CD4-positive, alpha-beta T cell (primary cell): ENCODE measurements at regions of chr4 and their contacts with region 1.

Region 1: DNA sequence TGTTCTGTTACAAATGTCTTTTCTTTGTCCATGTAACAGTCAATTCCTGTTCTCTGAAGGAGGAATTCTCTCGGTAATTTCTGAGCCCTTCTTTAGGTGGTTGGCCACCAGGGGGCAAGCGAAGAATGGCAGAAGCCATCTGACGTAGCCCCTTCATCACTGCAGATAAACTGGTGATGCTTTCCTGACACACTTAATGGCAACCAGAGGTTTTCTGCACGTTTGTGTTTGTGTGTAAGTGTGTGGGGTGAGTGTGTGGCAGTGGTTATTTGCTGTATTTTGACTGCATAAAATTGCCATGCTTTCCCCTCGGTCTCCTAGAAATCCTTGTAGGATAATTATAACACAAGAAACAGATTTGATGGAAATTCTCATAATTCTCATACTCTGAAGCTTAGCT is 64.8 kb upstream of the STOX2 start:
- DNase-seq: peak; percentile 37 to 75 (median 54)
- ATAC-seq: no peak
- H3K4me3 ChIP-seq: no peak overlapping the region
- H3K4me3 Mint-ChIP-seq: no peak overlapping the region
- H3K27ac ChIP-seq: no peak overlapping the region
- H3K27ac Mint-ChIP-seq: no peak overlapping the region
- H3K4me1 ChIP-seq: no peaks in the 10 kb centered on the region
- H3K4me1 Mint-ChIP-seq: no peaks in the 10 kb centered on the region
- H3K27me3 ChIP-seq: peaks cover 0 to 9% of the 10 kb centered on the region in 2 experiments
- H3K27me3 Mint-ChIP-seq: peaks cover 38% of the 10 kb centered on the region
- CTCF ChIP-seq: peak; percentile 82

Region 2: GRCh38 chr4:184100297-184100885 is 260.1 kb after region 1 on chr4:
- CTCF ChIA-PET with region 1: no interaction called
- POLR2A ChIA-PET with region 1: no interaction called
- intact Hi-C with region 1: loop called (anchors 2 kb)
- DNase-seq: peak in 7 of 14 experiments; percentile 7 to 54 (median 27)
- ATAC-seq: no peak
- H3K4me3 ChIP-seq: no peak overlapping the region
- H3K4me3 Mint-ChIP-seq: no peak overlapping the region
- H3K27ac ChIP-seq: no peak overlapping the region
- H3K27ac Mint-ChIP-seq: no peak overlapping the region
- H3K4me1 ChIP-seq: no peaks in the 10 kb centered on the region
- H3K4me1 Mint-ChIP-seq: peaks cover 8% of the 10 kb centered on the region
- H3K27me3 ChIP-seq: peaks cover 0 to 6% of the 10 kb centered on the region in 2 experiments
- H3K27me3 Mint-ChIP-seq: peaks cover 25% of the 10 kb centered on the region
- CTCF ChIP-seq: peak; percentile 51

Region 3: DNA sequence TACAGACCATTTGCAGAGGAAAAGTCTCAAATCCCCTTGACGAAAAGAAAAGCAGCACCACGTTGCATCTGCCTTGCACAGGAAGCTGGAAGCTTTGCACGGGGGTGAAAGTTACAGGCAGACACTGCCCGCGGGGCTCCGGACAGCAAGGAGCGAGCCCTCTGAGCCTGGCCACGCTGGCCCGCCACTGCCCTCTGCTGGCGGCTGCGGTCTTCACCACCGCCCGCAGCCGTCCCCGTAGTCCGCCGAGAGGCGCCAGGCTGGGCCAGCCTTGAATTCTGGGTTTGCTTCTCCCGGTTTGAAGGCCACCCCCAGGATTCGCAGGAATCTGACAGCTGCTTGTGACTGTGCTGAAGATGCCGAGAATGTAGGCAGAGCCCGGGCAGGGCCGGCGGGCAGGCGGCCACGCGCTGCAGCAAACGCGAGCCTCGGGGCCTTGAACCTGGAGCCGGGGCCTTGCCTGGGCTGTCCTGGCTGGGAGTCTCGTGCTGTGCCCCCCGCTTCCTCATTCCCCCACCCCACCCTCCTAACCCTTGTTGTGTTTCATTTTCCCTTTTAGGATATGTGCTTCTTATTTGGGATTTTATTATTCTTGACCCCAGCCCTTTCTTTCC is 328.2 kb after region 1 on chr4:
- CTCF ChIA-PET with region 1: no interaction called
- POLR2A ChIA-PET with region 1: no interaction called
- intact Hi-C with region 1: loop called (anchors 2 kb)
- DNase-seq: peak in 13 of 14 experiments; percentile 21 to 71 (median 34)
- ATAC-seq: peak; percentile 60
- H3K4me3 ChIP-seq: no peak overlapping the region
- H3K4me3 Mint-ChIP-seq: no peak overlapping the region
- H3K27ac ChIP-seq: no peak overlapping the region
- H3K27ac Mint-ChIP-seq: no peak overlapping the region
- H3K4me1 ChIP-seq: peaks cover 8% of the 10 kb centered on the region
- H3K4me1 Mint-ChIP-seq: no peaks in the 10 kb centered on the region
- H3K27me3 ChIP-seq: peaks cover 26 to 31% of the 10 kb centered on the region in 2 experiments
- H3K27me3 Mint-ChIP-seq: peaks cover 93% of the 10 kb centered on the region
- CTCF ChIP-seq: peak; percentile 80

Region 4: GRCh38 chr4:184250795-184251669 is 410.7 kb after region 1 on chr4:
- CTCF ChIA-PET with region 1: no interaction called
- POLR2A ChIA-PET with region 1: no interaction called
- intact Hi-C with region 1: loop called in 1 of 2 experiments (anchors 2 kb)
- DNase-seq: peak in 4 of 14 experiments; percentile 28 to 79 (median 68)
- ATAC-seq: peak; percentile 82
- H3K4me3 ChIP-seq: no peak overlapping the region
- H3K4me3 Mint-ChIP-seq: no peak overlapping the region
- H3K27ac ChIP-seq: no peak overlapping the region
- H3K27ac Mint-ChIP-seq: no peak overlapping the region
- H3K4me1 ChIP-seq: peaks cover 6% of the 10 kb centered on the region
- H3K4me1 Mint-ChIP-seq: no peaks in the 10 kb centered on the region
- H3K27me3 ChIP-seq: no peaks in the 10 kb centered on the region
- H3K27me3 Mint-ChIP-seq: no peaks in the 10 kb centered on the region
- CTCF ChIP-seq: peak; percentile 76

Region 5: DNA sequence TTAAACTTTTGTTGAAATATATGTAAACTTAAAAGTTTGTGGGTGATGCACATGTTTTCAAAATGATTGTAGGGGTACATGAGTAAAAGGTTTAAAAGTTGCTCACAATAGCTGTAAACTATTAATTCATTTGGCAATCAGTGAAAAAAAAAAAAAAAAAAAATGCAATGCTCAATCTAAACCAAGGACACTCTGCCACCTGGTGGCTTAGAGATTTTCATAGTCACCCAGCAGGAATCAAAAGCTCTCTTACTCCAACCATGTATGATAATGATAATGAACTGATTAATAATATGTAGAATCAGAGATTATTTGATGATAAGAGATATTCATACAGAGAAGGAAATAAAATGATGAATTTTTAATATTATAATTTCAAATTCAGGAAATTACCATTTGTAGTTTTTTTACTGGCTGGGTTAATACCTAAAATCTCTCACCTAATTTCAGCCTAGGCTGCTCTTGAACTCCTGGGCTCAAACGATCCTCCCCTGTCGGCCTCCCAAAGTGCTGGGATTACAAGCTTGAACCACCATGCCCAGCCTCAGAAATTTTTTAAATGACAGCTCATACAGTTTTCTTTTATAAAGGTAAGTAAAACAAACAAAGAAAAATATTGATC is 1255.8 kb after region 1 on chr4:
- CTCF ChIA-PET with region 1: no interaction called
- POLR2A ChIA-PET with region 1: no interaction called
- intact Hi-C with region 1: loop called (anchors 5 kb)
- DNase-seq: peak in 5 of 14 experiments; percentile 4 to 49 (median 36)
- ATAC-seq: no peak
- H3K4me3 ChIP-seq: no peak overlapping the region
- H3K4me3 Mint-ChIP-seq: no peak overlapping the region
- H3K27ac ChIP-seq: no peak overlapping the region
- H3K27ac Mint-ChIP-seq: no peak overlapping the region
- H3K4me1 ChIP-seq: no peaks in the 10 kb centered on the region
- H3K4me1 Mint-ChIP-seq: no peaks in the 10 kb centered on the region
- H3K27me3 ChIP-seq: peaks cover 11 to 15% of the 10 kb centered on the region in 2 experiments
- H3K27me3 Mint-ChIP-seq: peaks cover 47% of the 10 kb centered on the region
- CTCF ChIP-seq: peak; percentile 57